HCT116 (cell line): ENCODE measurements at regions of chr1 and their contacts with region 1.

Region 1: DNA sequence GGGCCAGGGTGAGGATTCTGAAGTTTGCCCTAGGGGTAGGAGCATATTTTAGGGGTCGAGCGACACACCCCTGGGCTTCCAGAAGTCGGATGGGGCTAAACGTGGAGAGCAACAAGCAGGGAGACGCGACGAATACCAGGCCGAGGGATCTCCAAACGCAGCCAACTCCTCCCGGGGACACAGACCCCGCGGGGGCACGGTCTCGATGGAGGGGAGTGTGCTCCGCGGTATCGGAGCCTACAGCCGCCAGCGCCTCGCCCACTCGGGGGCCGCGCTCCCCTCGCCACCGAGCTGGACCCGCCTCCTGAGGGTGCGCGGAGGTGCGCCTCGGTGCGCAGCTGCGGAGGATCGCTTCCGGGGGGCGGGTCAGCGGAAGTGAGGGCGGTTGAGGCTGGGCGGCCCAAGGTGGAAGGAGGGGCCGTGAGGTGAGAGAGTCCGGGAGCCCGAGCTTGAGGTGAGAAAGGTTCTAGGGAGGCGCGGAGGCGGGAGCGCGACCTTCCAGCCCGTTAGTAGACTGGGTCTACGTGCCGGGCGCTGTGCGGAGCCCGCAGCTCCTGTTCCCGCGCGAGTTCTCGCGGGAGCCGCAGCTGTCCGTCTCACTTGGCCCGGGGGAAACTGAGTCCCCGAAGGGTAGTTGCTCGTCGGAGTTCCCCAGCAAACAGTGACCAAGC is at the start of gene MTFR1L:
- DNase-seq: peak; percentile 39
- ATAC-seq: peak; percentile 88
- H3K4me3 ChIP-seq: peak within 1 kb of the TSS; percentile 90 to 92
- H3K27ac ChIP-seq: peak within 1 kb of the TSS; percentile 81
- H3K4me1 ChIP-seq: peaks cover 18 to 33% of the 10 kb centered on the region in 2 experiments; a peak in 3 of 4 replicates
- H3K27me3 ChIP-seq: no peaks in the 10 kb centered on the region
- CTCF ChIP-seq: no peak
- POLR2A ChIP-seq: peak; percentile 46
- RAD21 ChIP-seq: no peak
- total RNA-seq, gene MTFR1L: 35.8 TPM

Region 2: GRCh38 chr1:25253911-25254310 is 565.8 kb before region 1 on chr1:
- CTCF ChIA-PET with region 1: no interaction called
- POLR2A ChIA-PET with region 1: no interaction called
- RAD21 ChIA-PET with region 1: no interaction called
- intact Hi-C with region 1: loop called (anchors 10 kb)
- DNase-seq: no peak
- ATAC-seq: no peak
- H3K4me3 ChIP-seq: no peak overlapping the region
- H3K27ac ChIP-seq: no peak overlapping the region
- H3K4me1 ChIP-seq: 0 out of 4 replicates have a peak, but pooled peaks cover 0 to 5% of the 10 kb centered on the region in 2 experiments
- H3K27me3 ChIP-seq: no peaks in the 10 kb centered on the region
- CTCF ChIP-seq: no peak
- POLR2A ChIP-seq: no peak
- RAD21 ChIP-seq: no peak

Region 3: DNA sequence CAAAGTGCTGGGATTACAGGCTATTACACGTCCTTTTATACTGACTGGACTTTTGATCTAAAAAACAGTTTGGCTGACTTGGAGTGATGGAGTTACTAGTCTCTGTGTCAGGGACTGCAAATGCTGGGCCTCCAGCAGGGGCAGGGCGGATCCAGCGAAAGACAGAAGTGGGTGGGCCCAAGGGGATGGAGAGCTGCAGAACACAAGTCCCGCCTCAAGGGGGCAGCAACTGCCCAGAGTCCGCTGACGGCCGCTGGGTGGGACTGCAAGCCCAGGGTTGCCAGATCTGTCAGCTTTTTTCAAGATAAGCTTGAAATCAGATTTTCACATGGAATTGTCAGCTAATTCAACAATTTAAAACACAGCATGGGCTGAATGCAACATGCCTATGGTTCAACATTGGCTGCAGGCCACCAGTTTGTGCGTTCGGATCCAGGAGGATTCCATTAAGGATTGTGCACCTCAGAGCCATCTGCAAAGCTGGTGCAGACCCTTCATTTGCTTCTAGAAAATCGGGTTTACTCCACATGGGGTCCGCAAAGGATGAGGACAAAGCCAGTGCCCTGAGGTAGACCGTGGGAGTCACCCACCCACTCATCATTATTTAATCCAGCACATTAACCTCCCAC is 75.8 kb after region 1 on chr1:
- CTCF ChIA-PET with region 1: interaction called, 5 read pairs
- POLR2A ChIA-PET with region 1: no interaction called
- RAD21 ChIA-PET with region 1: no interaction called
- intact Hi-C with region 1: loop called (anchors 5 kb)
- DNase-seq: peak; percentile 73
- ATAC-seq: peak; percentile 70
- H3K4me3 ChIP-seq: no peak overlapping the region
- H3K27ac ChIP-seq: peak overlapping the region; percentile 24
- H3K4me1 ChIP-seq: peaks cover 44 to 61% of the 10 kb centered on the region in 2 experiments
- H3K27me3 ChIP-seq: no peaks in the 10 kb centered on the region
- CTCF ChIP-seq: peak; percentile 97 to 99 (median 98)
- POLR2A ChIP-seq: no peak
- RAD21 ChIP-seq: peak; percentile 97